HEK293 (cell line): ENCODE measurements at regions of chr20 and their contacts with region 1.

Region 1: GRCh38 chr20:25399037-25399430 is 8.4 kb upstream of the ABHD12 start:
- H3K4me3 ChIP-seq: no peak overlapping the region
- H3K27ac ChIP-seq: no peak overlapping the region
- H3K4me1 ChIP-seq: no peaks in the 10 kb centered on the region
- CTCF ChIP-seq: peak; percentile 53; the same call in 1 of the 2 replicates

Region 2: GRCh38 chr20:24992487-24993205 is 406.4 kb before region 1 on chr20 and contains the start of gene APMAP:
- CTCF ChIA-PET with region 1: interaction called, 17 read pairs
- POLR2A ChIA-PET with region 1: no interaction called
- H3K4me3 ChIP-seq: peak within 1 kb of the TSS; percentile 92
- H3K27ac ChIP-seq: peak within 1 kb of the TSS; percentile 62; the same call in 1 of the 2 replicates
- H3K4me1 ChIP-seq: no peaks in the 10 kb centered on the region; the same call in none of the 2 replicates
- CTCF ChIP-seq: peak; percentile 46; the same call in 1 of the 2 replicates

Region 3: GRCh38 chr20:25294459-25295385 is 104.3 kb before region 1 on chr20:
- CTCF ChIA-PET with region 1: interaction called, 47 read pairs
- POLR2A ChIA-PET with region 1: no interaction called
- H3K4me3 ChIP-seq: no peak overlapping the region
- H3K27ac ChIP-seq: 0 out of 2 replicates have a peak overlapping the region, but pooled peaks have one; percentile 19
- H3K4me1 ChIP-seq: no peaks in the 10 kb centered on the region
- CTCF ChIP-seq: peak; percentile 100

Region 4: DNA sequence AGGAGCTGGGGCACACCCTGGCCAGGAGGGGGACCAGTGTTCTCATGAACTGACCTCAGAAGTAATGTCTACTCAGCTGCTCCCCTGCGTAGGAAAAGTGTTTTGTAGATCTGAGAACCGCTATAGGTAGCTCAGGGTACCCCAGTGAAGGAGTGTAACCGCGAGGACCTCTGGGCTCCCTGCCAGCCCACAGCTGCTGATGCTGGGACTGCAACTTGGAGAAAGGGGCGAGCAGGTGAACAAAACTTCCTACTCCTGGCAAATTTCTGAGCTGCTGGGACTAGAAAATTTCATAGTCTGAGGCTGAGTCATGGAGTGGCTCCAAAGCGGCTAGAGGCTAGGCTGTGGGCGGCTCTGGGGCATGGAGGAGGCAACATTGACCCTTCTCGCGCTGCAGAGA is 99.2 kb before region 1 on chr20:
- CTCF ChIA-PET with region 1: interaction called, 47 read pairs
- POLR2A ChIA-PET with region 1: no interaction called
- H3K4me3 ChIP-seq: no peak overlapping the region
- H3K27ac ChIP-seq: peak overlapping the region; percentile 41; the same call in 1 of the 2 replicates
- H3K4me1 ChIP-seq: no peaks in the 10 kb centered on the region
- CTCF ChIP-seq: no peak

Region 5: DNA sequence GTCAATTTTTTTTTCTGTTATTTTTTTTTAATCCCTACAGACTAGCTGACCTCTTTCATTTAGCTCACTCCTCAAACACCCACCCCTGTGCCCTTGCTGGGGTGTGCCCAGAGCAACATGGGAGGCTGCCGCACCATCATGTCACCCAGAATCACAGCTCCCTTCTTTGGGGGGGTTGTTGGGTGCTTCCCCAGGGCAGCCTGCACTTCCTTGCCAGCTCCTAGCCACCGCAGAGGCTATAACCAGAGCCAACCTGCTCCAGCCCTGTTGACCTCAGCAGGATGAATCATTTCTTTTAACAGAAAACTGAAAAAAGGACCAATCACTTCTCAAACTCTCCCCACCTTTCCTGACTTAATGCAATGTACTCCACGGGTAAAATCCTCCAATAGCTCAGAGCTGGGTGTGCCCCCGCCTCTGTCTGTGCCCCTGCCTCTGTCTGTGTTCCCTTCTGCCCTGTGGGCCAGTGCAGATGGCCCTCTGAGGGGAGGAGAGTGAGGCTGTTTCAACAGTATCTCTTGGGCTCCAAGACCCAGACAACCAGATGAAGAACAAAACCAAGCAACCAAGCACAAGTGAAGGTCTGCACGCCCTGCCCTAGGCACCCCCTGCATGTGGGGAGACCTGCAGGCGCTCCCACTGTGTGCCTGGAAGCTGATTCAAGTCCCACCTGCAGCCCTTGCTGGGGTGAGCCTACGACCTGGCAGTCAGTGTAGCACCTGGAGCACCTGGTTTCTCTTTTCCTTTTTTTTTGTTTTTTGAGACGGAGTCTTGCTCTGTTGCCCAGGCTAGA is 83.4 kb before region 1 on chr20:
- CTCF ChIA-PET with region 1: interaction called, 16 read pairs
- POLR2A ChIA-PET with region 1: no interaction called
- H3K4me3 ChIP-seq: no peak overlapping the region
- H3K27ac ChIP-seq: no peak overlapping the region
- H3K4me1 ChIP-seq: peaks cover 5% of the 10 kb centered on the region
- CTCF ChIP-seq: no peak

Region 6: GRCh38 chr20:25378189-25378883 is 20.7 kb before region 1 on chr20:
- CTCF ChIA-PET with region 1: no interaction called
- POLR2A ChIA-PET with region 1: no interaction called
- H3K4me3 ChIP-seq: no peak overlapping the region
- H3K27ac ChIP-seq: no peak overlapping the region
- H3K4me1 ChIP-seq: no peaks in the 10 kb centered on the region
- CTCF ChIP-seq: no peak

Region 7: GRCh38 chr20:25470045-25470444 is 71.0 kb after region 1 on chr20:
- CTCF ChIA-PET with region 1: no interaction called
- POLR2A ChIA-PET with region 1: no interaction called
- H3K4me3 ChIP-seq: no peak overlapping the region
- H3K27ac ChIP-seq: no peak overlapping the region
- H3K4me1 ChIP-seq: no peaks in the 10 kb centered on the region
- CTCF ChIP-seq: no peak

Region 8: DNA sequence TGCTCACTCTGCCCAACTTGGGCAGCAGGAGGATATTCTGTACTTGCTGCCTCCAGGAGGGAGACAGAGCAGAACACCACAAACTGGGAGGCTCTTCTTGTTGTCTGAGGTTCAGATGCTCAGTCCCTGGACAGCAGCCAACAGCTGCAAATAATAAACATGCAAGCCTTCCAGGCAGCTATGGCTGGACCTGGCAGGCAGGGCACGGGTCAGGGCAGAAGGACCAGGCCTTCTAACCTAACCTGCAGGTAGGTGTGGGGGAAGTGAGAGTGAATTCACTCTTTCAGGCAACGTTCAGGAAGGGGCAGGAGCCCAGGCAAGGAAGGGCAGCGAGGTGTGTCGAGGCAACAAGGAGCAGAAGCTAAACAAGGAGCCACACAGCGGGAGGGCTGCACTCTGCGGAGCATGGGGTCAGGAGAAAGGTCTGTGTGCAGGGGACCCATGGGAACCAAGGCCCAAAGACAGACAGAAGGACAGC is 154.8 kb after region 1 on chr20:
- CTCF ChIA-PET with region 1: no interaction called
- POLR2A ChIA-PET with region 1: no interaction called
- H3K4me3 ChIP-seq: no peak overlapping the region
- H3K27ac ChIP-seq: no peak overlapping the region
- H3K4me1 ChIP-seq: peaks cover 12% of the 10 kb centered on the region
- CTCF ChIP-seq: no peak